ENCODE measurements at regions of chr3 and their contacts with region 1.

Region 1: DNA sequence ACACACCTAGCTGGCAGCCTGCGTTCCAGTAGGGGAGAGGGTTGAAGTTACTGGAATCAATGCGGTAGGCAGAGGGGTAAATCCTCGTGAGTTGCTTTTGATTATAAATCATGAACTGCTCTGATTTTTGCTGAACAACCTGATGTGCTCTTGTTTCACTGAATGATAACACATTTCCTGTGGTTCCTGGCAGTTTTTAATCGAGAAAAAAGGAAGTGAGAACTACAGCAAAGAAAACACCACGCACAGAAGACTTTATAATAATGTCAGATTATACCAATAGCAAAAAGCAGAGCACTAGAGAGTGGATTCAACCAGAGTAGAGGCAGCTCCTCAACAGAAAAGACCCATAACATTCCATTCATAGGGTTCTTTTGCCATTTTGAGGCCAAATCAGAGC is 200.8 kb upstream of the STRIT1 start:
- DNase-seq: no peak
- H3K4me3 ChIP-seq: no peak overlapping the region
- H3K27ac ChIP-seq: no peak overlapping the region
- H3K4me1 ChIP-seq: peaks cover 9% of the 10 kb centered on the region
- H3K27me3 ChIP-seq: no peaks in the 10 kb centered on the region
- CTCF ChIP-seq: no peak

Region 2: GRCh38 chr3:155382396-155383042 is 111.8 kb before region 1 on chr3:
- CTCF ChIA-PET with region 1: no interaction called
- dilution Hi-C with region 1: loop called (anchors 5 kb)
- in situ Hi-C with region 1: no loop called
- intact Hi-C with region 1: no loop called
- DNase-seq: peak; percentile 52
- H3K4me3 ChIP-seq: no peak overlapping the region
- H3K27ac ChIP-seq: no peak overlapping the region
- H3K4me1 ChIP-seq: peaks cover 6% of the 10 kb centered on the region
- H3K27me3 ChIP-seq: no peaks in the 10 kb centered on the region
- CTCF ChIP-seq: peak; percentile 81 to 94

Measured in mammary epithelial cell (primary cell).